Breast epithelium (tissue), 4 donors: ENCODE measurements at regions of chr2 and their contacts with region 1.

Region 1: DNA sequence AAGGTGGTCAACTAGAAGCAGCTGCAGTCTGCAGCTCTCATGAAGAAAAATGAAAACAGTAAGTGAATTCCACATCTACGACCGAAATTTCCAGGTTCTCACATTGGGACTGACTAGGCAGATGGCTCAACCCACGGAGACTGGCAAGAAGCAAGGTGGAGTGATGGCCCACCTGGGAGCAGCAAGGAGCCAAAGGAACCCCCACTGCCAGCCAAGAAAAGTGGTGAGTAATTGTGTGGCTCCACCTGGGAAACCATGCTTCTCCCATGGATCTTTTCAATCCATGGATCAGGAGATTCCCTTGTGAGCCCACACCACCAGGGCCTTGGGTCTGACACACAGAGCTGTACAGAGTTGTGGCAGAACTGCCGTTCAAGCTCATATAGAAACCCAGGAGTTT is 64.0 kb downstream of the ZSWIM2 start:
- DNase-seq: no peak
- H3K4me3 ChIP-seq: no peak overlapping the region
- H3K27ac ChIP-seq: no peak overlapping the region
- H3K4me1 ChIP-seq: no peaks in the 10 kb centered on the region
- H3K27me3 ChIP-seq: no peaks in the 10 kb centered on the region
- CTCF ChIP-seq: no peak
- POLR2A ChIP-seq: no peak

Region 2: DNA sequence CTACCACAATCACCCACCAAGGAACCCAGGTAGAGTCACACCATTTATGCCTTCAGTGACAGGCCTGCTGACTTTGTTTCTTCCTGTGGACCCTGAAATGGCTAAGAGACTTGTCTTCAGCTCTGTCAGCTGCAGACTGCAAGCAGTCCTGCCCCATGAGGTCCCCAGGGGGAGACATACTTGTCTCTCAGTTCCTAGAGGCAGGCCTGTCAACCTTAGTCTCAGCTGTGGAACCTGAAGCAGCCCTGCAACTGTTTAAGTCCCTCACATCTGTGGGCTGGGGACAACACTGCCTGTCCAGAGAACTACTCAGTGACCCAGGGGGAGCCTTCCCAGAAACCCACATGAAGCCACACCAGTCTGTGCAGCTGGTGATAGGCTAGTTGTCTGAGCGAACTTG is 15.6 kb before region 1 on chr2:
- intact Hi-C with region 1: loop called (anchors 2 kb)
- DNase-seq: no peak
- H3K4me3 ChIP-seq: no peak overlapping the region
- H3K27ac ChIP-seq: no peak overlapping the region
- H3K4me1 ChIP-seq: no peaks in the 10 kb centered on the region
- H3K27me3 ChIP-seq: no peaks in the 10 kb centered on the region
- CTCF ChIP-seq: no peak
- POLR2A ChIP-seq: no peak

Region 3: GRCh38 chr2:188024811-188025210 is 1239.9 kb after region 1 on chr2:
- intact Hi-C with region 1: no loop called
- DNase-seq: no peak
- H3K4me3 ChIP-seq: no peak overlapping the region
- H3K27ac ChIP-seq: no peak overlapping the region
- H3K4me1 ChIP-seq: no peaks in the 10 kb centered on the region
- H3K27me3 ChIP-seq: no peaks in the 10 kb centered on the region
- CTCF ChIP-seq: no peak
- POLR2A ChIP-seq: no peak